ENCODE measurements at regions of chr7 and their contacts with region 1.

Region 1: GRCh38 chr7:100852048-100852872 is at the start of gene SLC12A9:
- DNase-seq: peak; percentile 86 to 94
- H3K4me3 ChIP-seq: peak within 1 kb of the TSS; percentile 74
- H3K4me1 ChIP-seq: peaks cover 3% of the 10 kb centered on the region
- H3K27me3 ChIP-seq: no peaks in the 10 kb centered on the region

Region 2: DNA sequence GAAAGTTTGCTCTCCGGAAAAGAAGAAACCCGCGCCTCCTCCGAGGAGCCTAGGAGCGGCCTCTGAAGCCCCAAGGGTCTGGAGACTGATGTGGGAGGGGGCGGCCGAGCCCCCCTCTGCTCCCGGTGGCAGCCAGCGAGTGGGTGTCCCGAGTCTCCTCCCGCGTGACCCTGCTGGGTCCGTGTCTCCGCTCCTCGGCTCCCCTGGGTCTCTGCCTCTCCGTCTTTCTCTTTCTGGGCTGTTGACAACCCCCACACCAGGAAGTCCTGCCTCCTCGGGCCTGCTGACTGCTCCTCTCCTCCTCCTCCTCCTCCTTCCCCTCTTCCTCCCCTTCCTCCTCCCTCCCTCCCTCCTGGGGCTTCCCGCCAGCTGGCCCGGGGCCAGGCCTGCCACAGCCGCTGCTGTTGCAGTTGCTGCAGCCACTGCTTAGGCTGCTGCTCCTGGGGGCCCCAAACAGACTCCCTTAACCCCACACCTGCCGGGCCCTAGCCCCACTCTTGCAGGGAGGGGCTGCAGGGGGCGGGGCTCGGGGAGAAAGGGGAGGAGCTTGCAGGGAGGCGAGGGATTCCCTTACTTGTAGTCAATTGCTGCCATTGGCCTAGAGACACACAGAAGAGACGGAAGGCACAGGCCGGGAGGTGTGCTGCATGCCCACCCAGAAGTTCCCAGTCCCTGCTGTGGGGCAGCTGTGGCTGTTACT is 373.1 kb before region 1 on chr7 and contains the start of gene TSC22D4:
- in situ Hi-C with region 1: loop called (anchors 10 kb)
- DNase-seq: peak; percentile 94 to 97
- H3K4me3 ChIP-seq: peak within 1 kb of the TSS; percentile 94
- H3K4me1 ChIP-seq: peaks cover 11% of the 10 kb centered on the region
- H3K27me3 ChIP-seq: no peaks in the 10 kb centered on the region

Region 3: GRCh38 chr7:100705753-100706671 is 146.2 kb before region 1 on chr7 and contains the start of gene POP7:
- in situ Hi-C with region 1: loop called (anchors 5 kb)
- DNase-seq: peak; percentile 90 to 100
- H3K4me3 ChIP-seq: peak within 1 kb of the TSS; percentile 99
- H3K4me1 ChIP-seq: peaks cover 10% of the 10 kb centered on the region
- H3K27me3 ChIP-seq: no peaks in the 10 kb centered on the region; the same call in 1 of the 2 replicates

Measured in HAP-1 (cell line).